Left ventricle myocardium inferior (tissue), 1 donor: ENCODE measurements at regions of chr12 and their contacts with region 1.

Region 1: DNA sequence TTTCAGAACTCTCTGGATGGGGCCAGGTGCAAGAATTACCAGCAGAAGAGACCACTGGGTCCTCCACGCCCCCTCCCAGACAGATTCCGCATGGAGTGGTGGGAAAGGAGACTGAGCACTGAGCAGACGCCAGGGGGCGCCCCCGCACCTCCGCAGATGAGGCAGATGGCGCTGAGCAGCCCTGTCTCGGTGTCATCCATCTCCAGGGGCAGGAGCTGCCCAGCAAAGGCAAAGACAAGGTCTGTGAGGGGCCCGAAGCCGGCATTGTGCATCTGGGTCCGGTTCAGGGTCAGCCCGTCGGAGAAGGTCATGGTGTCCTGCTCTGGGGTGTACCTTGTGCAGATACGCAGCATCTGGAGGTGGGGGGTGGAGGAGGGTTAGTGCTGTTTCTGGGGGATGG is 6.3 kb upstream of the ITGB7 start:
- DNase-seq: peak; percentile 87
- H3K4me3 ChIP-seq: peak overlapping the region; percentile 56
- H3K27ac ChIP-seq: peak overlapping the region; percentile 100
- H3K4me1 ChIP-seq: peaks cover 72% of the 10 kb centered on the region
- H3K27me3 ChIP-seq: no peaks in the 10 kb centered on the region
- CTCF ChIP-seq: peak; percentile 96

Region 2: GRCh38 chr12:52495389-52495788 is 718.0 kb before region 1 on chr12:
- intact Hi-C with region 1: no loop called
- DNase-seq: no peak
- H3K4me3 ChIP-seq: no peak overlapping the region
- H3K27ac ChIP-seq: peak overlapping the region; percentile 48
- H3K4me1 ChIP-seq: peaks cover 34% of the 10 kb centered on the region
- H3K27me3 ChIP-seq: peaks cover 50% of the 10 kb centered on the region
- CTCF ChIP-seq: no peak

Region 3: DNA sequence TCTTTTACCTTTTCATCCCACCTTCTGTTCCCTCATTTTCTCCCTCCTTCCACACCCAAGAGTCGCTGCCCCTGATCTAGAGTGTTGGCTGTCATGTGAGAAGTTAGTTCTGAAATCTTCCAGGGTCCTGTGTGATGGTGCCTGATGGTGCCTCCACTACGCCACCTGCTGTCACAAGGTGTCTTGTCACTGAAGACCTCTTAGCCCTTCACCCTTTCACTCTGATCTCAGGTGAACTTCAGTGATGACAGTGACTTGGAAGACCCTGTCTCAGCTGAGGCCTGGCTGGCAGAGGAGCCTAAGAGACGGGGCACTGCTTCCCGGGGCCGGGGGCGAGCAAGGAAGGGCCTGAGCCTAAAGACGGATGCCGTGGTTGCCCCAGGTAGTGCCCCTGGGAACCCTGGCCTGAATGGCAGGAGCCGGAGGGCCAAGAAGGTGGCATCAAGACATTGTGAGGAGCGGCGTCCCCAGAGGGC is 74.4 kb after region 1 on chr12:
- intact Hi-C with region 1: loop called (anchors 5 kb)
- DNase-seq: peak; percentile 67
- H3K4me3 ChIP-seq: no peak overlapping the region
- H3K27ac ChIP-seq: no peak overlapping the region
- H3K4me1 ChIP-seq: peaks cover 4% of the 10 kb centered on the region
- H3K27me3 ChIP-seq: no peaks in the 10 kb centered on the region
- CTCF ChIP-seq: peak; percentile 79

Region 4: GRCh38 chr12:53568809-53569557 is 355.6 kb after region 1 on chr12:
- intact Hi-C with region 1: no loop called
- DNase-seq: no peak
- H3K4me3 ChIP-seq: no peak overlapping the region
- H3K27ac ChIP-seq: no peak overlapping the region
- H3K4me1 ChIP-seq: peaks cover 49% of the 10 kb centered on the region
- H3K27me3 ChIP-seq: no peaks in the 10 kb centered on the region
- CTCF ChIP-seq: no peak